K562 (cell line): ENCODE measurements at regions of chr6 and their contacts with region 1.

Region 1: GRCh38 chr6:149565527-149566409 is at the start of gene GINM1:
- DNase-seq: peak; percentile 98 to 99 (median 99)
- ATAC-seq: peak; percentile 94
- H3K4me3 ChIP-seq: peak within 1 kb of the TSS; percentile 99
- H3K27ac ChIP-seq: peak within 1 kb of the TSS; percentile 86
- H3K4me1 ChIP-seq: peaks cover 6 to 17% of the 10 kb centered on the region in 2 experiments; a peak in 4 of 5 replicates
- H3K27me3 ChIP-seq: no peaks in the 10 kb centered on the region
- CTCF ChIP-seq: peak; percentile 88 to 92 (median 90)
- EP300 ChIP-seq: no peak
- POLR2A ChIP-seq: no peak
- RAD21 ChIP-seq: peak; percentile 65 to 74
- polyA plus RNA-seq, gene GINM1: 5.0 to 6.1 TPM

Region 2: GRCh38 chr6:149380523-149380922 is 185.2 kb before region 1 on chr6:
- CTCF ChIA-PET with region 1: no interaction called
- POLR2A ChIA-PET with region 1: no interaction called
- in situ Hi-C with region 1: no loop called
- intact Hi-C with region 1: no loop called
- DNase-seq: no peak
- ATAC-seq: no peak
- H3K4me3 ChIP-seq: no peak overlapping the region
- H3K27ac ChIP-seq: no peak overlapping the region
- H3K4me1 ChIP-seq: no peaks in the 10 kb centered on the region
- H3K27me3 ChIP-seq: no peaks in the 10 kb centered on the region
- CTCF ChIP-seq: no peak
- EP300 ChIP-seq: no peak
- POLR2A ChIP-seq: no peak
- RAD21 ChIP-seq: no peak

Region 3: DNA sequence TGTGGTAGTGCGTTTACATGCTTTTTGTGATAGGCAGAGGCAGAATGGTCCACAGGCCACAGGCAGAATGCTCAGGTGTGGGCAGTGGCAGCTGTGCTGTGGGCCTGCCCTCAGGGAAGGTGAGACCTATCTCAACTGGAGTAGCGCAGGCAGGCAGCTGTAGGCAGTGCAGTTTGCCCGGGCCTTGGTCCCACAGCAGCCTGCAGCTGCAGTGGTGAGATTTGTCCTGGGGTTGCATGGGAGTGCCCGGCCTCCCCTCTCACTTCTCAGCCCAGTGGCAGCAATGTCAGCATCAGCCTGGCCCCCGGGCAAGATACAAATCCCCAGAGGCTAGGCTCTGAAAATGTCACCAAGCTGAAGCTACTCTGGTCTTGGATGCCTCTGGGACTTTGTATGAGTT is 13.8 kb before region 1 on chr6:
- CTCF ChIA-PET with region 1: no interaction called
- POLR2A ChIA-PET with region 1: interaction called, 34 read pairs
- in situ Hi-C with region 1: no loop called
- intact Hi-C with region 1: no loop called
- DNase-seq: no peak
- ATAC-seq: peak; percentile 50
- H3K4me3 ChIP-seq: no peak overlapping the region
- H3K27ac ChIP-seq: no peak overlapping the region
- H3K4me1 ChIP-seq: peaks cover 0 to 9% of the 10 kb centered on the region in 2 experiments; a peak in 3 of 5 replicates
- H3K27me3 ChIP-seq: peaks cover 11 to 15% of the 10 kb centered on the region in 2 experiments; a peak in 3 of 5 replicates
- CTCF ChIP-seq: no peak
- EP300 ChIP-seq: no peak
- POLR2A ChIP-seq: no peak
- RAD21 ChIP-seq: no peak

Region 4: GRCh38 chr6:149648148-149649145 is 82.7 kb after region 1 on chr6 and contains the start of gene KATNA1:
- CTCF ChIA-PET with region 1: no interaction called
- POLR2A ChIA-PET with region 1: interaction called, 5 read pairs
- in situ Hi-C with region 1: no loop called
- intact Hi-C with region 1: loop called (anchors 1 kb)
- DNase-seq: peak; percentile 99
- ATAC-seq: peak; percentile 96
- H3K4me3 ChIP-seq: peak within 1 kb of the TSS; percentile 78
- H3K27ac ChIP-seq: peak within 1 kb of the TSS; percentile 95
- H3K4me1 ChIP-seq: peaks cover 8 to 16% of the 10 kb centered on the region in 2 experiments; a peak in 4 of 5 replicates
- H3K27me3 ChIP-seq: no peaks in the 10 kb centered on the region
- CTCF ChIP-seq: peak; percentile 22 to 46 (median 33); a peak in 3 of 6 replicates
- EP300 ChIP-seq: peak; percentile 55
- POLR2A ChIP-seq: peak; percentile 94
- RAD21 ChIP-seq: peak in 1 of 2 experiments; percentile 25; a peak in 1 of 4 replicates
- polyA plus RNA-seq, gene KATNA1: 22.5 to 33.3 TPM

Region 5: DNA sequence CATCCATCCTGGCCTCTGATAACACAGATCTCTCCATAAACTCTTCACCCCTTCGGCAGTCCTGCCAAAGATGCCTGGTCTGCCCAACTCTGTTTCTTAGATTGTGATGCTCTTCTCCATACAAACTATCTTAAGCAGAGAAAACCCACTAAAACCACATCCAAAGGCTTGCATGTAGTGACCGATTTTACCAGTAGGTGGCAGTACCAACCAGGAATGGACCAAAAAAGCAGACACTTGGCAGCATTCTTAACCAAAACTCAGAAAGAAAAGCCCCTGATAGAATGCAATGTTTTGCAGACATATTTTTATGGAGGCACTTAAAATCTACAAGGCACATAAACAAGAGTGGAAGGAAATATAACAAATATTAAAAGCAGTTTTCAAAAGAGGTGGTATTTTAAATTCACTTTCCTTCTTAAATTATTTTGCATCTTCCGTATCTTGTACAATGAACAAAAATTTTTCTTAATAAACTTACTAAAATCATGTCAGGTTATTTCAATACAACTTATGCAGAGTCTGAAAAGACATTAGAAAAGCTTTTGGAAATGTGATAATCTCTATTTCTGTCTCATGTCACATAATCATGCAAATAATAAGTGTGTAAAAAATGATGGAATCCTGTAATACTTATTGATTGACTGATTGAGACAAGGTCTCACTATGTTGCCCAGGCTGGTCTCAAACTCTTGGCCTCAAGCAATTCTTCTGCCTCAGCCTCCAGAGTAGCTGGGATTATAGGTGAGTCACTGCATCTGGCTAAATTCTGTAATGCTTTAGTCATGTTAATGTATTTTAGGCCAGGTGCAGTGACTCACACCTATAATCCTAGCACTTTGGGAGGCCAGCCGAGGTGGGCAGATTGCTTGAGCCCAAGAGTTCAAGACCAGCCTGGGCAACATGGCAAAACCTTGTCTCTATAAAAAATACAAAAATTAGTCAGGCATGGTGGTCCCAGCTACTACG is 269.0 kb after region 1 on chr6:
- CTCF ChIA-PET with region 1: interaction called, 6 read pairs
- POLR2A ChIA-PET with region 1: no interaction called
- in situ Hi-C with region 1: no loop called
- intact Hi-C with region 1: loop called (anchors 1 kb)
- DNase-seq: peak; percentile 65 to 76 (median 67)
- ATAC-seq: peak; percentile 86
- H3K4me3 ChIP-seq: no peak overlapping the region
- H3K27ac ChIP-seq: no peak overlapping the region
- H3K4me1 ChIP-seq: no peaks in the 10 kb centered on the region
- H3K27me3 ChIP-seq: peaks cover 6 to 31% of the 10 kb centered on the region in 2 experiments
- CTCF ChIP-seq: peak; percentile 90 to 98 (median 93)
- EP300 ChIP-seq: no peak
- POLR2A ChIP-seq: no peak
- RAD21 ChIP-seq: peak; percentile 89 to 92

Region 6: DNA sequence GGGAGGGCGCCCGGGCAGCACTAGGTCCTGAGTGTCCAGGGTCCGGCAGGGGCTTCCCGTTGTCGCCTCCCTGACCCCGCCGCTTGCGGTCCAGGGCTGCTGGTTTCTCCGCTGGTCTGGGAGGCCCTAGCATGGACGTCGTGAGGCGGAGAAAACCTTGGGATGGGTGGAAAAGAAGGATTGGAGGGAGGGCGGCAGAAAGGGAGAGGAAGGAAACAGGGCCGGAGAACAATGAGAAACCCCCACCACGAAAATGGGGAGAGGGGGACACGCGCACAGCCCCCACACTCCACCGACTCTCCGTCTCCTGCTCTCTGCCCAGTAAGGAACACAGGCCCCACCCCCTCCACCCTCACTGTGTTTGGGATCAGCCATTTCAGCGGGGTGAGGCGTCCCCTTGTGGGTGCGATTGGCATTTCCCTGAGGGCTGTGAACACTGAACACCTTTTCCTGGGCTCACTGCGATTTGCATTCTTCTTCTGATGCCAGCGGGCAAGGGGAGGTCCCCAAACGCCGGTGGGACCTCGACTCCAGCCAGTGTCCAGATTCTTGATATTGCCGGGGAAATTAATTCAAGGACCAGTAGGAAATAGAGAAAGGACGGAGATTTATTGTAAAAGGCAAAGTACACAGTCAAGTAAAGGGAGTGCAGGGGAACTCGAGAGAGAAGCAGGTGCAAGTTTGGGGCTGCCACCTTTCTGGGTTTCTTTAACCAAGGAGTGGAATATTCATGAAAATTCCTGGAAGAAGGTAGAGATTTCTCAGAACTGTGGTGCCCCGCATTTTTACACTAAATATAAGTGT is 360.4 kb after region 1 on chr6:
- CTCF ChIA-PET with region 1: interaction called, 5 read pairs
- POLR2A ChIA-PET with region 1: no interaction called
- in situ Hi-C with region 1: no loop called
- intact Hi-C with region 1: loop called (anchors 5 kb)
- DNase-seq: peak; percentile 75 to 91 (median 82)
- ATAC-seq: peak; percentile 97
- H3K4me3 ChIP-seq: peak overlapping the region; percentile 30
- H3K27ac ChIP-seq: no peak overlapping the region
- H3K4me1 ChIP-seq: peaks cover 0 to 26% of the 10 kb centered on the region in 2 experiments; a peak in 3 of 5 replicates
- H3K27me3 ChIP-seq: peaks cover 21 to 52% of the 10 kb centered on the region in 2 experiments
- CTCF ChIP-seq: peak; percentile 93 to 96 (median 95)
- EP300 ChIP-seq: 0 out of 2 replicates have a peak, but pooled peaks have one; percentile 20
- POLR2A ChIP-seq: no peak
- RAD21 ChIP-seq: peak; percentile 94 to 98